ENCODE measurements at regions of chr7 and their contacts with region 1.

Region 1: GRCh38 chr7:21507626-21508343 is 35.1 kb upstream of the DNAH11 start:
- DNase-seq: no peak
- ATAC-seq: peak; percentile 66

Region 2: DNA sequence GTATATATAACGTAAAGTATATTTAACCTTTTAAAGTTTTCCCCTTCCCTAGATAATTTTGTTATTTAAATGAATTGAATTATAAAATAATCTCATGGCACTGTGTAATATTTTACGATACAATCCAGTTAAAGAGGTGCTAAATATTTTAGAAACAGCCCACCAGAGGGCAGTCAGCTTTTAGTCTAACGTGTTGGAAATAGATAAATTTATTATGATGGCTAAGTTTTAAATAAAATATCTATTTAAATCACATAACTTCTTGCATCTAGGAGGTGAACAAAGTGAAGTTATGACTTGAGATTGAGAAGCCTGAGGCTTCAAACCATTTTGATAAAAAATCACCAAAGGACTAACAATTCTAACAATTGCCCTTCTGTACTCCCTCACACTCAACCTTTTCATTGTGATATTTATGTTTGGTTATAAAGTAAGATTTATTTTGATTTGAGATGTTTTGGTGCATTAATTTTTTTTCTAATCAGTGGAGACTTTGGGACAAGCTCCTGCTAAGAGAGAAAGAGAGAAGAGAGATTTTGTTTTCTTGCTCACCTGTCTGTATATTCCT is 251.4 kb before region 1 on chr7:
- intact Hi-C with region 1: loop called (anchors 5 kb)
- DNase-seq: no peak
- ATAC-seq: no peak

Measured in Right ventricle myocardium superior (tissue), 1 donor.